Heart left ventricle (tissue), 16 donors: ENCODE measurements at regions of chr9 and their contacts with region 1.

Region 1: GRCh38 chr9:109817846-109818472 is 38.0 kb downstream of the PALM2AKAP2 start:
- DNase-seq: peak in 4 of 5 donors; percentile 71 to 86 (median 80)
- ATAC-seq: peak; percentile 74 to 82 (median 78)
- H3K4me3 ChIP-seq: peak overlapping the region in 4 of 12 donors; percentile 14 to 20 (median 20)
- H3K27ac ChIP-seq: peak overlapping the region in 11 of 12 donors; percentile 15 to 81 (median 70)
- H3K4me1 ChIP-seq: peaks cover 0 to 41% (median 21%) of the 10 kb centered on the region in 12 donors
- H3K27me3 ChIP-seq: no peaks in the 10 kb centered on the region
- CTCF ChIP-seq: peak; percentile 78 to 92 (median 82)
- POLR2A ChIP-seq: no peak

Region 2: DNA sequence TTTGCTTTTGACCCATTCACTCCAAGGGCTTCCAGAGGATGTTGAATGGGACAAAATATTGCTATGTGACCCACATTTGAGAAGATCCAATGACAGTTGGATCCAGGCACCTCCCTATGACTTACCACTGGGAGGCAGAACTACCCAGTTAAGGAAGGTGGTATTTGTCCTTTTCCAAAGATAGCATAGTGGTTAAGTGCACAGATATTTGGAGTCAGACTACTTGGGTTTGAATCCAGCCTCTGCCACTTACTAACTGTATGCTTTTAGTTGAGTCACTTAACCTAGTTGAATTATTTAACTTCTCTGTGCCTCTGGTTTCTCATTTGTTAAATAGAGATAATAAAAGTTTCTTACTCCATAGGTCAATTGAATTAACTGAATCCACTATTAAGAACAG is 112.4 kb before region 1 on chr9:
- intact Hi-C with region 1: loop called in 1 of 10 experiments (anchors 5 kb)
- DNase-seq: no peak
- ATAC-seq: peak in 1 of 4 donors; percentile 38
- H3K4me3 ChIP-seq: no peak overlapping the region
- H3K27ac ChIP-seq: no peak overlapping the region
- H3K4me1 ChIP-seq: peaks cover 0 to 38% (median 19%) of the 10 kb centered on the region in 12 donors
- H3K27me3 ChIP-seq: no peaks in the 10 kb centered on the region
- CTCF ChIP-seq: peak in 1 of 12 donors; percentile 8
- POLR2A ChIP-seq: no peak

Region 3: GRCh38 chr9:109856785-109857184 is 38.8 kb after region 1 on chr9:
- intact Hi-C with region 1: loop called in 1 of 10 experiments (anchors 2 kb)
- DNase-seq: peak; percentile 84 to 95 (median 86)
- ATAC-seq: peak; percentile 99 to 100 (median 100)
- H3K4me3 ChIP-seq: no peak overlapping the region
- H3K27ac ChIP-seq: peak overlapping the region; percentile 56 to 96 (median 88)
- H3K4me1 ChIP-seq: peaks cover 0 to 69% (median 40%) of the 10 kb centered on the region in 12 donors
- H3K27me3 ChIP-seq: no peaks in the 10 kb centered on the region
- CTCF ChIP-seq: no peak
- POLR2A ChIP-seq: no peak

Region 4: GRCh38 chr9:109887079-109887478 is 69.1 kb after region 1 on chr9:
- intact Hi-C with region 1: loop called in 4 of 10 experiments (anchors 5 kb)
- DNase-seq: peak in 2 of 5 donors; percentile 36 to 54
- ATAC-seq: peak; percentile 77 to 88 (median 86)
- H3K4me3 ChIP-seq: no peak overlapping the region
- H3K27ac ChIP-seq: peak overlapping the region; percentile 35 to 87 (median 75)
- H3K4me1 ChIP-seq: peaks cover 2 to 61% (median 38%) of the 10 kb centered on the region in 12 donors
- H3K27me3 ChIP-seq: no peaks in the 10 kb centered on the region
- CTCF ChIP-seq: no peak
- POLR2A ChIP-seq: no peak

Region 5: DNA sequence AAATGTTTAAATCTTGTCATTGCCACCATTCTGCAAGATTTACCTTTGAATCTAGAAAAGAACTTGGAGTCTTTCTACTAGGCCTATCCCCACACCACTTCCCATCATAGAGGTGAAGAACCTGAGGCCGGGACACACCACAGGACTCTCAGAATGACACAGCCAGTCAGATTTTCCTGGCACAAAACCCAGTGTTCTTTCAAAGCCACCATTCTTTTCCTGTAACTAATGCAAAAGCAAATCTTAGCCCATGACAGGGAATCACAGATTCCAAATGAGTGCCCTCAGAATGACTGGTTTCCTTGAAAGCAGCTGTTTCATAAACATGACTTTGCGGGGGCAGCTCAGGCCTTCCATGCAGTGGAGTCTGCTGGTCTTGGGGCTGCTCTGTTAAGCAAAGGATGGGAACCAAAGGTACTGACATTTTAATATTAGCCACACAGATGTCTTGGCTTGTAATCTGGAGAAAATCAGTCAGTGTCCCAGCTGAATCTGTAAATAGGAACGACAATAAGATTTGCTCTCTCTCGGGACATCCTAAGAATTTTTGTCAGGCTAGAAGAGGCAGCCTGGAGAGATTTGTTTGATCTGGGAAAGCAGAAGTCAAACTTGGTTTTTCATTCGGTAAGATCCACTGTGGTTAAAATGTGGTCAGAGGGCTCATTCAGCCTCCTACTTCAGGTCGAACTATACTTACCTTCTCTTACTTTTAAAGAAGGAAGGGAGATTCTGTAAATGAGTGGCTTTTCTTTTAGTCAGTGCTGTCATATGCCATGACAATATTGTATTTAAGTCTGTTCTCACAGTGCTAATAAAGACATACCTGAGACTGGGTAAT is 77.2 kb after region 1 on chr9:
- intact Hi-C with region 1: loop called in 1 of 10 experiments (anchors 5 kb)
- DNase-seq: peak in 4 of 5 donors; percentile 32 to 61 (median 37)
- ATAC-seq: peak; percentile 30 to 82 (median 64)
- H3K4me3 ChIP-seq: no peak overlapping the region
- H3K27ac ChIP-seq: peak overlapping the region in 10 of 12 donors; percentile 16 to 61 (median 44)
- H3K4me1 ChIP-seq: peaks cover 0 to 41% (median 8%) of the 10 kb centered on the region in 12 donors
- H3K27me3 ChIP-seq: no peaks in the 10 kb centered on the region
- CTCF ChIP-seq: no peak
- POLR2A ChIP-seq: no peak